ENCODE measurements at regions of chr7 and their contacts with region 1.

Region 1: GRCh38 chr7:155769701-155770100 is 42.6 kb downstream of the SHH start:
- DNase-seq: no peak
- H3K4me3 ChIP-seq: no peak overlapping the region
- H3K27ac ChIP-seq: no peak overlapping the region
- H3K4me1 ChIP-seq: peaks cover under 1 to 23% (median 6%) of the 10 kb centered on the region in 6 donors
- H3K27me3 ChIP-seq: no peaks in the 10 kb centered on the region
- CTCF ChIP-seq: no peak
- POLR2A ChIP-seq: no peak

Region 2: GRCh38 chr7:155555116-155555695 is 214.5 kb before region 1 on chr7:
- intact Hi-C with region 1: no loop called
- DNase-seq: no peak
- H3K4me3 ChIP-seq: no peak overlapping the region
- H3K27ac ChIP-seq: no peak overlapping the region
- H3K4me1 ChIP-seq: no peaks in the 10 kb centered on the region
- H3K27me3 ChIP-seq: peaks cover 0 to 58% (median 0%) of the 10 kb centered on the region in 7 donors
- CTCF ChIP-seq: no peak
- POLR2A ChIP-seq: no peak

Region 3: DNA sequence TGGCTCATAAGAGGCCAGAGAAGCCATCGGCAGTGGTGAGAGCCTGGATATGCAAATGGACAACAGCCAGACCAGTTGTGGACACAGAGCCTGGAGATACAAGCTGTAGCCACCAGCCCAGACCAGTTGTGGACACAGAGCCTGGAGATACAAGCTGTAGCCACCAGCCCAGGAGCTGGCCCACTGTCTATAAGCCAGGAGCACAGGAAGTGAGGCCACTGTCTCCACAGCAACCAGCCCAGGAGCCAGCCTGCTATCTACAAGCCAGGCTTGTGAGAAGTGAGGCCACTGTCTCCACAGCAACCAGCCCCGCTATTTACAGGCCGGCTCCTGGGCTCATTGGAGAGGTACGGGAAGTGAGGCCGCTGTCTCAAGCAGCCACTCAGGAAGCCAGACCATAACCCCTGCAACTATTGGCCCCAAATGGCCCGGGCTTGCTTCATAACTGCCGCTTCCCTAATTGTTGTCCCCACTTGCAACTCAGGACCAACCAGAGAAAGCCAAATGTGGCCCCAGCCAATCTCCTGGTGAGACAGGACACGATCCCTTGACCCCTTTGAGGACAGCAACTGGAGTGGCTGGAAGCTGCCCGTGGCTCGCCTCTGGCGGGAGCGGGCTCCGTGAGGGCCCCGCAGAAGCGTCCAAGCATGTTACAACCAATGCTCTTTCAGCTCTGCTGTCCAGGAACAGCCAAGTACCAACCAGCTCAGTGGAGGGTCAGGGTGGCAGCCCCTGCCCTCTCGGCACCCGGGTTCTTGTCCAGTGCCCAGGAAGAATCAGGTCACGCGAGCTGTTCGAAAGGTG is 179.3 kb before region 1 on chr7:
- intact Hi-C with region 1: loop called (anchors 5 kb)
- DNase-seq: peak; percentile 91
- H3K4me3 ChIP-seq: peak overlapping the region in 1 of 8 donors; percentile 50
- H3K27ac ChIP-seq: peak overlapping the region in 7 of 8 donors; percentile 67 to 95 (median 87)
- H3K4me1 ChIP-seq: peaks cover 0 to 52% (median 3%) of the 10 kb centered on the region in 6 donors
- H3K27me3 ChIP-seq: peaks cover 0 to 40% (median 2%) of the 10 kb centered on the region in 7 donors
- CTCF ChIP-seq: no peak
- POLR2A ChIP-seq: no peak